GM12878 (cell line): ENCODE measurements at regions of chr2 and their contacts with region 1.

Region 1: GRCh38 chr2:46574457-46575355 is 95.3 kb downstream of the TMEM247 start:
- DNase-seq: peak; percentile 51
- ATAC-seq: peak; percentile 70
- H3K4me3 ChIP-seq: peak overlapping the region; percentile 48; the same call in 1 of the 2 replicates
- H3K27ac ChIP-seq: peak overlapping the region; percentile 16
- H3K4me1 ChIP-seq: peaks cover 49% of the 10 kb centered on the region
- H3K27me3 ChIP-seq: no peaks in the 10 kb centered on the region
- CTCF ChIP-seq: no peak
- EP300 ChIP-seq: no peak
- POLR2A ChIP-seq: no peak
- RAD21 ChIP-seq: no peak

Region 2: DNA sequence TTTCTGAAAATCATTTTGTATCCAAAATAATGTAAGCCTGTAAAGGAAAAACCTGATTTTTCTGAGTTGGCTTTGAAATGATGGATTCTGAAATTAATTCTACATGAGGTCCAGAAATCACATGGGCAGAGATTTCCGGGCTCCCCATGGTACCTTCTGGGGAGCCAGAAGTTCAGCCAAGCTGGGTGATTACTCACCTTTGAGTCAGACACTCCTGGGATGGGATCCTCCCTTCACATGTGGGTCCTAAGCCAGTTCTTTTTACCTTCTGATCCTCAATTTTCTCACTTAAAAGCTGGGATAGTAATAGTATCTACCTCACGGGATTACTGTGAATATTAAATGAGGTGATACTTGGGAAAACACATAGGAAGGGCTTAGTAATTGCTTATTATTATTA is 457.3 kb before region 1 on chr2:
- CTCF ChIA-PET with region 1: no interaction called
- POLR2A ChIA-PET with region 1: no interaction called
- RAD21 ChIA-PET with region 1: no interaction called
- SMC1A ChIA-PET with region 1: no interaction called
- in situ Hi-C with region 1: no loop called
- intact Hi-C with region 1: no loop called
- DNase-seq: no peak
- ATAC-seq: no peak
- H3K4me3 ChIP-seq: no peak overlapping the region
- H3K27ac ChIP-seq: no peak overlapping the region
- H3K4me1 ChIP-seq: no peaks in the 10 kb centered on the region
- H3K27me3 ChIP-seq: no peaks in the 10 kb centered on the region
- CTCF ChIP-seq: no peak
- EP300 ChIP-seq: no peak
- POLR2A ChIP-seq: no peak
- RAD21 ChIP-seq: no peak

Region 3: GRCh38 chr2:46268196-46268595 is 306.5 kb before region 1 on chr2:
- CTCF ChIA-PET with region 1: no interaction called
- POLR2A ChIA-PET with region 1: no interaction called
- RAD21 ChIA-PET with region 1: no interaction called
- SMC1A ChIA-PET with region 1: no interaction called
- in situ Hi-C with region 1: no loop called
- intact Hi-C with region 1: no loop called
- DNase-seq: peak; percentile 21
- ATAC-seq: peak; percentile 90
- H3K4me3 ChIP-seq: no peak overlapping the region
- H3K27ac ChIP-seq: no peak overlapping the region
- H3K4me1 ChIP-seq: no peaks in the 10 kb centered on the region
- H3K27me3 ChIP-seq: no peaks in the 10 kb centered on the region
- CTCF ChIP-seq: no peak
- EP300 ChIP-seq: no peak
- POLR2A ChIP-seq: no peak
- RAD21 ChIP-seq: no peak

Region 4: DNA sequence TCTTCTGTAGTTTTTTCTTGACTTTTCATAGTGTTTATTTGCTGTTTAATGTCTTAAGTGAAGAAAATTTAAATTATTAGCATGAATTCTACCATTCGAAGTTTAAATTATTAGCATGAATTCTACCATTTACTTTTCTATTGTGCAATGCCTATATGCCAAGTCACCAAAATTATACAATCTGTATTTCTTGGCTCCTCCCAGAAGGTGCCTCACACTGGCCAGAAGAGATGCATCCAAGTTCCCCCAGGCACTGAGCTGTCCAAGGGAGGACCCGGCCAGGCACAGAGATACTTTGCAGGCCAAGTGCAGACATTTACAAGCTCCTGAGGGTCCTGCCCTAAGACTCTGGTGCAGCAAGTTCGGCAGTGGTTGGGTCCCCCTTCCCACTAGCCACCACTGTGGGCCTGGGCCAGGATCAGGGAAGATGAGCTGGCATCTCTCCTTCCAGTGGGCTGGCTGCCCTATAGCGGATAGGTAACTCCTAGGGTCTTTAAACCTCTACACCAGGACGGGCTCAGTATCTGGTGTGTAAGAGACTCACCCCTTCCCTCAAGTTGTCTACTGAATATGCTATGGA is 64.0 kb before region 1 on chr2:
- CTCF ChIA-PET with region 1: interaction called, 3 read pairs
- POLR2A ChIA-PET with region 1: interaction called, 11 read pairs
- RAD21 ChIA-PET with region 1: no interaction called
- SMC1A ChIA-PET with region 1: interaction called, 5 read pairs
- in situ Hi-C with region 1: no loop called
- intact Hi-C with region 1: no loop called
- DNase-seq: no peak
- ATAC-seq: no peak
- H3K4me3 ChIP-seq: no peak overlapping the region
- H3K27ac ChIP-seq: no peak overlapping the region
- H3K4me1 ChIP-seq: no peaks in the 10 kb centered on the region
- H3K27me3 ChIP-seq: no peaks in the 10 kb centered on the region
- CTCF ChIP-seq: no peak
- EP300 ChIP-seq: no peak
- POLR2A ChIP-seq: no peak
- RAD21 ChIP-seq: no peak

Region 5: DNA sequence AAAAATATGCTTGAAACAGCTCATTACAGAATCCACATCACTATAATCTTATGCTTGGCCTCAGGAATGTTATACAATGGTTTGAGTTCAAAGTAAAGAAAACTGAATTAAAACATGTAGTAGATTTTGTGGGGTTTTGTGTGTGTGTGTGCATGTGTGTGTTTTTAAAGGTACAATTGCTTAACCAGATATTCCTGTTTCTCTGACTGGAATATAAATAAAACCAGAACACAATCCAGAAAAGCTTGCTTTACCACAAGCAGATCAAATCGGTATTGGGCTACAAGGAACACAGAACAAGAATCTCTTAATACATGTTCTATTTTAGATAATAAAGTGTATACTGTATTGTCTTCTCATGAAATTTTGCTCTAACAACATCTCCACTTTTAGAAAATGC is 14.7 kb after region 1 on chr2:
- CTCF ChIA-PET with region 1: interaction called, 4 read pairs
- POLR2A ChIA-PET with region 1: interaction called, 9 read pairs
- RAD21 ChIA-PET with region 1: interaction called, 8 read pairs
- SMC1A ChIA-PET with region 1: interaction called, 15 read pairs
- in situ Hi-C with region 1: no loop called
- intact Hi-C with region 1: no loop called
- DNase-seq: no peak
- ATAC-seq: no peak
- H3K4me3 ChIP-seq: no peak overlapping the region
- H3K27ac ChIP-seq: no peak overlapping the region
- H3K4me1 ChIP-seq: no peaks in the 10 kb centered on the region
- H3K27me3 ChIP-seq: no peaks in the 10 kb centered on the region
- CTCF ChIP-seq: no peak
- EP300 ChIP-seq: no peak
- POLR2A ChIP-seq: no peak
- RAD21 ChIP-seq: no peak

Region 6: DNA sequence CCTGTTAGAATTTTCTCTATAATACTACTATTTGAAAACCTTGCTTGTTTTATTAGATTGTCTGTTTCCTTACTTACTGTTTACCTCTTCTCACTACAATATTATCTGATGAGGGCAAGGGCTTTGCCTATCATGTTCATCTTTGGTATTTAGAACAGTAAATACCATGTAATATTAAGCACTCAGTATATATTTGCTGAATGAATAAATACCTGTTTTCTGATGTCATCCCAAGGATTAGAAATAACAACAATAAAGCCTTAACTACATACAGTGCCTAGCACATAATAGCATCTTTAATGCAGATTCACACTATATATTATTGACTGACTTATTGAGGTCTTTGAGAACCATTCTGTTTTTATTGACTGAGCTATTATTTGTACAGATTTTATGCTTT is 46.8 kb after region 1 on chr2:
- CTCF ChIA-PET with region 1: no interaction called
- POLR2A ChIA-PET with region 1: no interaction called
- RAD21 ChIA-PET with region 1: no interaction called
- SMC1A ChIA-PET with region 1: no interaction called
- in situ Hi-C with region 1: no loop called
- intact Hi-C with region 1: no loop called
- DNase-seq: no peak
- ATAC-seq: no peak
- H3K4me3 ChIP-seq: no peak overlapping the region
- H3K27ac ChIP-seq: no peak overlapping the region
- H3K4me1 ChIP-seq: no peaks in the 10 kb centered on the region
- H3K27me3 ChIP-seq: no peaks in the 10 kb centered on the region
- CTCF ChIP-seq: no peak
- EP300 ChIP-seq: no peak
- POLR2A ChIP-seq: no peak
- RAD21 ChIP-seq: no peak